HepG2 (cell line): ENCODE measurements at regions of chr13 and their contacts with region 1.

Region 1: DNA sequence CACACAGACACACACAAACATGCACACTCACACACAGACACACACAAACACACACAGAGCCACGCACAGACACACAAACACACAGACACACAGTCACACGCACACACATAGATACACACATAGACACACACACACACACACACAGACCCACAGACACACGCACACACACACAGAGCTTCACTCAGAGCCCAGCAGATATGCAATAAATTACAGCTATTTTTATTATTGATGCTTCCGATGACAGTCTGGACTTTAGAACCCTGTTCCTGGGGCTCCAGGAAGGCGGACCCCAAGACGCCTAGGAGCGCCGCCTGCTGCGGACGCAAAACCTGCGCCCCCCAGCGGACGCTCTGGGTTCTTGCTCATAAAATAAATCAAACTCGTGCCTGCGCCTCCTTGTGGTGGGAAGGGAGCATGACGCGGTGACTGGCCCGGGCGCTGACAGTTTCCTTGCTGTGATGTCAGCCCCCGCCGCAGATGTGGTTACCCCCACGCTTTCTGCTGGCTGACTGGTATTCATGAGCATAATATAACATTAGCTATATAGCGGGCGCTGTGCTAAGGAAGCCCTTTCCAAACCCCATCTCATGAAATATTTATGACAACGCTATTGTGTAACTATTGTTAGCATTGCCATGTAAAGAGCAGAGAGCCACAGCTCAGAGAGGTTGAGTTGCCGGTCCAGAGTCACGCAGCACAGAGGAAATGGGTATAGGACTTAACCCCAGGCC is 64.4 kb upstream of the TM9SF2 start:
- DNase-seq: peak; percentile 64
- ATAC-seq: peak; percentile 26
- H3K4me3 ChIP-seq: peak overlapping the region in 1 of 3 experiments; percentile 40; a peak in 2 of 6 replicates
- H3K27ac ChIP-seq: no peak overlapping the region
- H3K4me1 ChIP-seq: peaks cover 38% of the 10 kb centered on the region
- H3K27me3 ChIP-seq: peaks cover 0 to 18% of the 10 kb centered on the region in 2 experiments; a peak in 4 of 5 replicates
- CTCF ChIP-seq: peak; percentile 97
- EP300 ChIP-seq: no peak
- POLR2A ChIP-seq: no peak
- RAD21 ChIP-seq: peak; percentile 92

Region 2: GRCh38 chr13:98959786-98960605 is 476.9 kb before region 1 on chr13:
- CTCF ChIA-PET with region 1: no interaction called
- POLR2A ChIA-PET with region 1: no interaction called
- in situ Hi-C with region 1: no loop called
- intact Hi-C with region 1: no loop called
- DNase-seq: no peak
- ATAC-seq: no peak
- H3K4me3 ChIP-seq: no peak overlapping the region
- H3K27ac ChIP-seq: no peak overlapping the region
- H3K4me1 ChIP-seq: peaks cover 5% of the 10 kb centered on the region; the same call in 1 of the 2 replicates
- H3K27me3 ChIP-seq: no peaks in the 10 kb centered on the region
- CTCF ChIP-seq: no peak
- EP300 ChIP-seq: no peak
- POLR2A ChIP-seq: no peak
- RAD21 ChIP-seq: no peak

Region 3: DNA sequence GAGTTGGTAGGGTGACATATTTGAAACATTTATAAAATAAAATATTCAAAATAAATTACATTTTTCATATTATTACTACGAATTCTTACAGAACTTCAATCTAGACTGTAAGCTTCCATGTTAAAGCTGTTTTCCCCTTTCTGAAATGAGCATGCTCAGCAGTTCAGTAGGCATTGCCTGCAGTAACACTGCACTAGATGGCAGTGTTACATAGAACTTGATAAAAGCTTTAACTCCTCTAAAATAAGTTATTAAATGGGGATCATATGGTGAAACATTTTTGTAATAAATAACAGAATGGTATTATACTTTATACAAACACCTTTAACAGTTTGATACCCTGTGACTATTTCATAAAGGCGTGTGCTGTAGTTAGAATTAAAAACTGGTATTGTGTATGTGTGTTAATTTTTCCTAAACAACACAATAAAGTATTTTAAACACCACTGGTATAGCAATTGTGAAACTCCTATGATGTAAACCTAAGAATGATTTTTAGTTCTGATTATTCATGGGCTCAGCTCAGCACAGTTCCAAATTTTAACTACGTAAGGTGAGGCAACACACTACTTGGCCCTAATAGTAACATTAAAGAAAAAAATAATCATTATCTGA is 167.1 kb before region 1 on chr13:
- CTCF ChIA-PET with region 1: interaction called, 7 read pairs
- POLR2A ChIA-PET with region 1: no interaction called
- in situ Hi-C with region 1: loop called (anchors 10 kb)
- intact Hi-C with region 1: loop called (anchors 1 kb)
- DNase-seq: peak; percentile 25
- ATAC-seq: peak; percentile 71
- H3K4me3 ChIP-seq: no peak overlapping the region
- H3K27ac ChIP-seq: no peak overlapping the region
- H3K4me1 ChIP-seq: no peaks in the 10 kb centered on the region
- H3K27me3 ChIP-seq: no peaks in the 10 kb centered on the region
- CTCF ChIP-seq: peak; percentile 58
- EP300 ChIP-seq: no peak
- POLR2A ChIP-seq: no peak
- RAD21 ChIP-seq: no peak; the same call in 1 of the 2 replicates

Region 4: DNA sequence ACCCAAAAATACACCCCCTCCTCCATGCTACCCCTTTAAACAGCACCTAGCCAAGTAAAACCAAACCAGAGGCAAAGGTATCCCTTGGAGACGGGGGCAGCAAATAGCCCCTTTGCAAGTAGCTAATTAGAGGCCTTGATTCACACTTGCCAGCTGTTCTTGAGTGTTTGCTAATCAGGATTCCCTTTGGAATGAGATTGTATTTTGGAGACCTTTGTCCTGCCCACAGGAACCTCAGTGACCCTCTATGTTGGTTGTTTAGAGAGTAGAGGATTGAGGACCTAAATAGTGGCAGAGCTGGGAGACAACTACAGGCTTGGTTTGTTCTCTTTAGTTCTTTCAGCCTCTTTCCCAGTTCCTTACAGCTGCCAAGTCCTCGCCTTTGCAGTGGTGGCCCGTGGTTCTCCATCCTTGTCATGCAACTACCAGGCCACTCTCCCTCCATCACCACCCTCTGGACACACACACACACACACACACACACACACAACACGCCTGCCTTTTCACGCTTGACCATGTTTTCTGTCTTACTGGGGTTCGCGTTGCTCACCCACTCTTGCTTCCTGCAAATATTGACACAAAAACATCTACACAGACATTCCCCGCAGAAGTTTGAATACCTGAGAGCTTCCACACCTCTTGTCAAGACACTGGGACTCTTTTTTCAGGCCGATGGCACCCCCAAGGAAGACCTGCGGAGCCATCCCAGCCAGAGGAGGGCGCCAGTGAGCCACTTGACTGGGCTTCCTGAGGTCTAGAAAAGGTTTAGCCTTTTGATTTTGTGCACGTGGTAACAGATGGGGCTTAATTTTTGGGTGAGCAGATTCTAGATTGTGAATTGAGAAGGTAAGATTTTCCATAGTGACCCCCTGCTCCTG is 49.7 kb before region 1 on chr13:
- CTCF ChIA-PET with region 1: interaction called, 45 read pairs
- POLR2A ChIA-PET with region 1: no interaction called
- in situ Hi-C with region 1: no loop called
- intact Hi-C with region 1: loop called (anchors 1 kb)
- DNase-seq: peak; percentile 35
- ATAC-seq: peak; percentile 53
- H3K4me3 ChIP-seq: no peak overlapping the region
- H3K27ac ChIP-seq: no peak overlapping the region
- H3K4me1 ChIP-seq: no peaks in the 10 kb centered on the region
- H3K27me3 ChIP-seq: no peaks in the 10 kb centered on the region; a peak in 1 of 5 replicates
- CTCF ChIP-seq: peak; percentile 65
- EP300 ChIP-seq: no peak
- POLR2A ChIP-seq: no peak
- RAD21 ChIP-seq: peak; percentile 34; the same call in 1 of the 2 replicates

Region 5: DNA sequence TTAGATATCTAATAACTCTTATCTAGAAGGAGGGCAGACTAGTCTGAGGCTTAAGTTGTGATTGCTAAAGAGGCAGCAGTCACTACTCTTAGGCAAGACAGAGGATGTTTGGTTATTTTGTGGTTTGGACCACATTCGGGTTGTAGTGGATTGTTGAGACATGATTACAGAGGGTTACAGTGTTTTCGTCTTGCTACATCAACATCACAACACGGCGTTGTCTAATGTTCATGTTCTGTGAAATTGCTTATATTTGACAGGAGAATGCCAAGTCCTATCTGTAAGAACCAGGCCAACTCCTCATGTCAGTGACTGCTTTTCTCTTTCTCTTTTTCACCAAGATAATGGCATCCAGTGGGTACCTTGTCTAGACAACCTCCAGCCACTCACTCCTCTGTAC is 47.6 kb after region 1 on chr13:
- CTCF ChIA-PET with region 1: no interaction called
- POLR2A ChIA-PET with region 1: no interaction called
- in situ Hi-C with region 1: no loop called
- intact Hi-C with region 1: no loop called
- DNase-seq: no peak
- ATAC-seq: no peak
- H3K4me3 ChIP-seq: no peak overlapping the region
- H3K27ac ChIP-seq: no peak overlapping the region
- H3K4me1 ChIP-seq: no peaks in the 10 kb centered on the region
- H3K27me3 ChIP-seq: no peaks in the 10 kb centered on the region
- CTCF ChIP-seq: no peak
- EP300 ChIP-seq: no peak
- POLR2A ChIP-seq: no peak
- RAD21 ChIP-seq: no peak

Region 6: GRCh38 chr13:99548448-99548847 is 111.6 kb after region 1 on chr13:
- CTCF ChIA-PET with region 1: no interaction called
- POLR2A ChIA-PET with region 1: no interaction called
- in situ Hi-C with region 1: no loop called
- intact Hi-C with region 1: no loop called
- DNase-seq: no peak
- ATAC-seq: no peak
- H3K4me3 ChIP-seq: no peak overlapping the region
- H3K27ac ChIP-seq: no peak overlapping the region
- H3K4me1 ChIP-seq: no peaks in the 10 kb centered on the region
- H3K27me3 ChIP-seq: no peaks in the 10 kb centered on the region
- CTCF ChIP-seq: no peak
- EP300 ChIP-seq: no peak
- POLR2A ChIP-seq: no peak
- RAD21 ChIP-seq: no peak